ENCODE measurements at regions of chr13 and their contacts with region 1.

Region 1: DNA sequence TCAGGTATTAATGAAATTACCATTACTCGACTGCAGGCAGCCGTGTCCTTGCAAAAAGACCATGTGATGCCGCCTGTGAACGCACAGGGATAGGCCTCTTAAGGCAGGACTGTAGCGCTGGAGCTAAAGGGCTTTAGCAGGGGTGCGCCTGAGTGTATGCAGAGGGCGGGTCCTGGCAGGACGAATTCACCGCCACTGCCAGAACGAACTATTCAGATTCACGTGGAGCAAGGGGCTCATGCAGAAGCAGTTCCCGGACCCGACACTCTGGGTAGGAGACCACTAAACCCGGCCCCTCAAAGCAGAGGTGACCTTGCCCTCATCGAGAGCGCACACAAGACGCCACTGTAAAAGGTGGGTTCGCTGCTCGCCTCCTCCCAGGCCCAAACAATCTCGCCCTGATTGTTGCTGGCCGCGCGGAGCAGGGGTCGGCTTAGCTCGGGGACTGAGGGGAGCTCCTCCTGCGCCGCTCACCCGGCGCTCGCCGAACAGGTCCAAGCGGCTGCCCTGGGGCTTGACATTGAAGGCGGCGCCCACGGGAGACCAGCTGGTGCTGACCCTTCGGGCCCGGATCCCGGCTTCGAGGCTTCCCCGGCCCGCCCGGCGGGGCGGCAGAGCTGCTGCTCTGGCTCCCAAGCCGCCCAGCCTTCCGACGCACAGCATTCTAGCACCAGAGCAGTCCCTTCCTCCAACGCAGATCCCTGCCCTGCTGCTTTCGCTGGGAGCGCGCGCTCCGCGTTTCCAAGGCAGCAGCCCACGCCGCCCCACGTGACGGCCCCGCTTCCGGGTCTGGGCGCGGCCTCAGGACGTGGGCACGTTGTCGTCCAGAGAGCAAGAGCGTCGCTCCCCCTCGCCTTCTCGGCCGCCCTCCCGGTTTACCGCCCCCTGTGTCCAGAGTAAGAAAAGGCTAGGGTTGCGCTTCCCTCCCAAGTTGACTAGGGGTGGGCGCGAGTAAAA is at the start of gene MIPEP:
- DNase-seq: peak; percentile 84
- ATAC-seq: peak; percentile 93
- H3K4me3 Mint-ChIP-seq: peak within 1 kb of the TSS; percentile 91
- H3K27ac Mint-ChIP-seq: peak within 1 kb of the TSS; percentile 71
- H3K4me1 Mint-ChIP-seq: peaks cover 27% of the 10 kb centered on the region
- H3K27me3 Mint-ChIP-seq: no peaks in the 10 kb centered on the region
- CTCF ChIP-seq: no peak
- total RNA-seq, gene MIPEP: 19.7 and 19.9 TPM in 2 replicates

Region 2: DNA sequence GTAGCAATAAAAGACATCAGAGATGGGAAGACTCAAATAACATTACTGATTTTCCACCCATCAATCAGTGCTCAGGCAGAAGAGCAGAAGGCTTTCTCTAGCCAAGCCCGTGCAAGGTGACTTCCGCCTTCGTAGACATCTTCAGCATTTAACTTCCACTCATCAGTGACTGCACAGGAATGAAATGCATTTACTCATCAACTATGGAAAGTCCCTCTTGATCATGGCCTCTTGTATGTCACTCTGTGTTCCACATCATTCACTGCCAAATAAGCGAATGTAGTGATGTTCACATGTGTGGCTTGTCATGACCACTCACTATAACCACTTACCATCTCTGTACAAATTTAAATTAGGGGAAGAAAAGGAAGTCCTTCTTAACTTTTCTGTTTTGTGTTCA is 504.8 kb before region 1 on chr13:
- CTCF ChIA-PET with region 1: no interaction called
- POLR2A ChIA-PET with region 1: no interaction called
- intact Hi-C with region 1: loop called (anchors 1 kb)
- DNase-seq: no peak
- ATAC-seq: peak; percentile 98
- H3K4me3 Mint-ChIP-seq: peak overlapping the region; percentile 36
- H3K27ac Mint-ChIP-seq: peak overlapping the region; percentile 87
- H3K4me1 Mint-ChIP-seq: peaks cover 35% of the 10 kb centered on the region
- H3K27me3 Mint-ChIP-seq: no peaks in the 10 kb centered on the region
- CTCF ChIP-seq: no peak

Region 3: DNA sequence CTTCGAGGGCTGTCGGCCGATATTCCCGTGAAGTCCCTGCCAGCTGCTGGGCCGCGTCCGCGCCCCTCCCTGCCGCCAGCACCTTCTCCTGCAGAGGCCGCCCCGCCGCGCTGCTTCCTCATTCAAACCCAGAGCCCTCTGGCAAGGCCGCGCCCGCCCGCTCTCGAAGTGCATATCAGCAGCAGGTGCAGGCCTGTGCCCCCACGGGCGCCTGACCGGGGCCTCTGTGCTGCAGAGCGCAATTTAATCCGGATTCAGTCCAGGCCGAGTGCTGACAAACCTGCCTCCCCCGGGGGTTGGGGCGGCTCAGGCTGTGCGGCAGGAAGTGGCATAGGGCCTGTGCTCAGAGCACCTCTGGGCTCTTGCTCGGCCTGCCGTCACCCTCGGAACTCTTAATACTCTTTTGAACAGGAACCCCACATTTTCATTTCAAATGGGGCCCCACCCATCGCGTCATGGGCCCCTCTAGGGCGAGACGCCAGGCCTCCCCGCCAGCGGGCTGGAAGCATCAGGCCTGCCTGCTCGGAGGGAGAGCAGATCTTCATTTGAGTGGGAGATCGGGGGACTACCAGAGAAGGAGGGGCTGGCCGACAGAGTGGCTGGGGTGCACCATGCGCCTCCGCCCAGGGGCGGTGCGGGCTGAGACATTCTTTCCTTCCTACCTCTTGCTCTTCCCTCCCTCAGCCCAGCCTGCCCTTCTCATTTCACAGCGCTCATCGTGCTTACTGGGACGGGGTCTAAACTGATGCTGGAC is 193.0 kb before region 1 on chr13:
- CTCF ChIA-PET with region 1: no interaction called
- POLR2A ChIA-PET with region 1: no interaction called
- intact Hi-C with region 1: loop called (anchors 1 kb)
- DNase-seq: peak; percentile 65
- ATAC-seq: peak; percentile 98
- H3K4me3 Mint-ChIP-seq: peak overlapping the region; percentile 77
- H3K27ac Mint-ChIP-seq: peak overlapping the region; percentile 93
- H3K4me1 Mint-ChIP-seq: peaks cover 17% of the 10 kb centered on the region
- H3K27me3 Mint-ChIP-seq: peaks cover 5% of the 10 kb centered on the region
- CTCF ChIP-seq: no peak

Region 4: GRCh38 chr13:24160454-24161009 is 271.6 kb after region 1 on chr13 and contains the start of gene SPATA13:
- CTCF ChIA-PET with region 1: no interaction called
- POLR2A ChIA-PET with region 1: no interaction called
- intact Hi-C with region 1: loop called (anchors 2 kb)
- DNase-seq: peak; percentile 86
- ATAC-seq: peak; percentile 98
- H3K4me3 Mint-ChIP-seq: peak within 1 kb of the TSS; percentile 83
- H3K27ac Mint-ChIP-seq: no peak within 1 kb of the TSS
- H3K4me1 Mint-ChIP-seq: peaks cover 18% of the 10 kb centered on the region
- H3K27me3 Mint-ChIP-seq: peaks cover 11% of the 10 kb centered on the region
- CTCF ChIP-seq: no peak
- total RNA-seq, gene SPATA13: 10.6 and 11.8 TPM in 2 replicates

Region 5: GRCh38 chr13:24512197-24512907 is 623.4 kb after region 1 on chr13 and contains the start of gene PARP4:
- CTCF ChIA-PET with region 1: no interaction called
- POLR2A ChIA-PET with region 1: no interaction called
- intact Hi-C with region 1: loop called (anchors 1 kb)
- DNase-seq: peak; percentile 70
- ATAC-seq: peak; percentile 81
- H3K4me3 Mint-ChIP-seq: peak within 1 kb of the TSS; percentile 92
- H3K27ac Mint-ChIP-seq: peak within 1 kb of the TSS; percentile 88
- H3K4me1 Mint-ChIP-seq: peaks cover 24% of the 10 kb centered on the region
- H3K27me3 Mint-ChIP-seq: no peaks in the 10 kb centered on the region
- CTCF ChIP-seq: no peak
- total RNA-seq, gene PARP4: 50.0 and 56.7 TPM in 2 replicates

Region 6: GRCh38 chr13:25301347-25302047 is 1412.6 kb after region 1 on chr13 and contains the start of gene NUP58:
- CTCF ChIA-PET with region 1: no interaction called
- POLR2A ChIA-PET with region 1: no interaction called
- intact Hi-C with region 1: loop called (anchors 5 kb)
- DNase-seq: peak; percentile 89
- ATAC-seq: peak; percentile 99
- H3K4me3 Mint-ChIP-seq: peak within 1 kb of the TSS; percentile 91
- H3K27ac Mint-ChIP-seq: peak within 1 kb of the TSS; percentile 91
- H3K4me1 Mint-ChIP-seq: peaks cover 32% of the 10 kb centered on the region
- H3K27me3 Mint-ChIP-seq: peaks cover 19% of the 10 kb centered on the region
- CTCF ChIP-seq: no peak
- total RNA-seq, gene NUP58: 44.8 and 48.4 TPM in 2 replicates